ENCODE measurements at regions of chr3 and their contacts with region 1.

Region 1: GRCh38 chr3:125556314-125556713 is 36.3 kb upstream of the SNX4 start:
- DNase-seq: no peak
- H3K4me3 ChIP-seq: no peak overlapping the region
- H3K27ac ChIP-seq: no peak overlapping the region
- H3K4me1 ChIP-seq: no peaks in the 10 kb centered on the region
- H3K27me3 ChIP-seq: no peaks in the 10 kb centered on the region
- CTCF ChIP-seq: no peak
- POLR2A ChIP-seq: no peak

Region 2: GRCh38 chr3:124935264-124935663 is 621.0 kb before region 1 on chr3:
- intact Hi-C with region 1: loop called (anchors 10 kb)
- DNase-seq: no peak
- H3K4me3 ChIP-seq: no peak overlapping the region
- H3K27ac ChIP-seq: no peak overlapping the region
- H3K4me1 ChIP-seq: no peaks in the 10 kb centered on the region
- H3K27me3 ChIP-seq: no peaks in the 10 kb centered on the region
- CTCF ChIP-seq: no peak
- POLR2A ChIP-seq: no peak

Region 3: GRCh38 chr3:125651244-125651643 is 94.9 kb after region 1 on chr3:
- intact Hi-C with region 1: no loop called
- DNase-seq: no peak
- H3K4me3 ChIP-seq: no peak overlapping the region
- H3K27ac ChIP-seq: peak overlapping the region in 1 of 3 donors; percentile 95
- H3K4me1 ChIP-seq: peaks cover 9 to 32% of the 10 kb centered on the region in 2 donors
- H3K27me3 ChIP-seq: no peaks in the 10 kb centered on the region
- CTCF ChIP-seq: no peak
- POLR2A ChIP-seq: no peak